ENCODE measurements at regions of chr1 and their contacts with region 1.

Region 1: DNA sequence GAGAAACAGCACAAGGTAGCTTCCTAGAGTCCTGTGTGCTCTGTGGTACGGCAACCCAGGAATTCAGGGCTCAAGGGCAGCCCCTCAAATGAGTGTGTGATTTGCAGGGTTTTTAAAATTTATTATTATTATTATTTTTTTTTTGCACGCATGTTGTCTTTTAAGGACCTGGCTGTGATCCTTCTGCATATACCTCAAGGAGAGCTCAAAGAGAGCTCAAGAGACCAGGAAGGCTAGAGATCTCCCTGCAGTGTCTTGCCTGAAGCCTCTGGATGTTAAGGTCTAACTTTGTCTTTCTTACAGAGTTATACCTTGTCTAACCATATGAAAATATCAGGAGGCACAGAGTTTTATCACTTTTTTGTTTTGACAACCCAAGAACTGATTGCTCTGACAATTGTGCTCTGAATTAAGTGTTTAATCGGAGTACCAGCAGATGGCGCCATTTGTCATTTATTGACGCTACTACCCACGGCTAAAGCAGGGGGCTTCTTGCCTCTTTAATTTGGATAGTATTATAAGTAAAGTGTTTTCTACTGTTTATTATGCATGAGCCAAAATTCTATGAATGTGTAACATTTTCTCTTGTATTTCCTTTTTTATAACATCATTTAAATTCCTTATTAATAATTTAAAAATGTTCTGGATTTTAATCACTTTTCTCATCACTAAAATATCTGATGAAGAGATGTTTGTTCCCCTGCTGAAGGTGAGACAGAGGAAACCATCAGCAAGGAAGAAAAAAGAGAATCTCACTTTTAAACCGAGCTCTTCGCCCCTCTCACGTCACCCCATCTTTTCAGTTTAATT is 35.8 kb upstream of the LMO4 start:
- DNase-seq: peak; percentile 56 to 63
- H3K4me3 ChIP-seq: no peak overlapping the region
- H3K27ac ChIP-seq: no peak overlapping the region
- H3K4me1 ChIP-seq: no peaks in the 10 kb centered on the region
- H3K27me3 ChIP-seq: no peaks in the 10 kb centered on the region
- CTCF ChIP-seq: peak; percentile 51 to 84 (median 74)
- POLR2A ChIP-seq: no peak

Region 2: GRCh38 chr1:87953732-87954344 is 660.9 kb after region 1 on chr1:
- intact Hi-C with region 1: loop called (anchors 10 kb)
- DNase-seq: peak; percentile 43 to 56
- H3K4me3 ChIP-seq: no peak overlapping the region
- H3K27ac ChIP-seq: no peak overlapping the region
- H3K4me1 ChIP-seq: peaks cover 25 to 30% of the 10 kb centered on the region in 2 donors
- H3K27me3 ChIP-seq: no peaks in the 10 kb centered on the region
- CTCF ChIP-seq: peak in 5 of 6 experiments; percentile 26 to 66 (median 52)
- POLR2A ChIP-seq: no peak

Region 3: DNA sequence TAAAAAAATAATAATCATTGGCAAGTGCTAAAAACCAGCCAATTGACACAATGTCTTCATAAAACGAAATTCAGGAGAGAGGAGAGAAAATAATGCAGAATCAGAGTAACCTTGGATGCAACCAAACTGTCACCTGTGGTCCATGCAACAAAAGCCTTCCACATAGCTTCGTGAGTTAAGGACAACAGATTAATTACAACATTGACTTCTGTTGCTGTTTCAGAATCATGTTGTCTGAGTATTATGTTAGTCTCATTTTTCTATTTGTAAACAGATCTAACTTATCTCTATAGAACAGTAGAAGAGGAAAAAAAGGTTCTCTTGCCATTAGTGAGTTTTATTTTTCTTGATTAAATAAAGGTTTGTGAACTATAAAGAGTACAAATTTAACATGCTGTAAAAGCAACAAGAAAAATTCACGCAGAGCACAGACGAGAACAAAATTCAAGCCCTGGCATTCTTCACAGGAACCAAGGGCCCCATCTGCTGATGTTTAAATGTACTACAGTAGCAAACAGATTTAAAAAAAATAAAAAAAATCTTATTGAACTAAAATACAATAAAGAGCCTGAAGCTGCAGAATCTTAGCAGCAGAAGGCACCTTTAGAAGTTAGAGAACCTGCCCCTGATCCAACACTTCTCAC is 1010.1 kb after region 1 on chr1:
- intact Hi-C with region 1: loop called (anchors 5 kb)
- DNase-seq: peak; percentile 25 to 27
- H3K4me3 ChIP-seq: no peak overlapping the region
- H3K27ac ChIP-seq: no peak overlapping the region
- H3K4me1 ChIP-seq: no peaks in the 10 kb centered on the region
- H3K27me3 ChIP-seq: no peaks in the 10 kb centered on the region
- CTCF ChIP-seq: peak in 5 of 6 experiments; percentile 26 to 76 (median 64)
- POLR2A ChIP-seq: no peak